ENCODE measurements at regions of chr9 and their contacts with region 1.

Region 1: DNA sequence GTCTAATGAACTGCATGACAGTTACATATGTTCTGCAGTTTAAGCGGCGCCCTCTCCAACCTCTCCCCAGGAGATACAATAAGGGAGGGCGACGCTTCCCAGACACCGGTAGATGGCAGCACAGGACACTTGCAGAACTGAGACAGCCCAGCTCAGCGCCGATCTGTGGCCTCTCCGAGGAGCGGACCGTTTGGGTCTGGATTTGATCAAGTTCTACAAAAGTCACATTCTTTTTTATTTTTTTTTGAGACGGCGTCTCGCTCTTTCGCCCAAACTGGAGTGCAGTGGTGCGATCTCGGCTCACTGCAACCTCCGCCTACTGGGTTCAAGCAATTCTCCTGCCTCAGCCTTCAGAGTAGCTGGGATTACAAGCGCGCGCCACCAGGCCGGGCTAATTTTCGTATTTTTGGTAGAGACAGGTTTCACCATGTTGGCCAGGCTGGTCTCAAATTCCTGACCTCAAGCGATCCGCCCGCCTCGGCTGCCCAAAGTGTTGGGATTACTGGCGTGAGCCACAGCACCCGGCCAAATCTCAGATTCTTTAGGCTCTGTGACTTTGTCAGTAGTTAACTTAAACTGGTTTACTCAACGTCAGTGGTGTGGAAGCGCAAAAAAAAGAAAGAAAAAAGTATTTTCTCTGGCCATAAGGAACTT is 1.4 kb upstream of the ATOSB start:
- DNase-seq: peak; percentile 90 to 93
- ATAC-seq: peak; percentile 65 to 83
- H3K4me3 ChIP-seq: peak overlapping the region; percentile 48
- H3K27ac ChIP-seq: peak overlapping the region; percentile 44 to 71; a peak in 4 of 6 replicates
- H3K4me1 ChIP-seq: peaks cover 27% of the 10 kb centered on the region
- CTCF ChIP-seq: peak; percentile 98
- EP300 ChIP-seq: no peak
- POLR2A ChIP-seq: no peak
- RAD21 ChIP-seq: peak; percentile 94 to 96

Region 2: DNA sequence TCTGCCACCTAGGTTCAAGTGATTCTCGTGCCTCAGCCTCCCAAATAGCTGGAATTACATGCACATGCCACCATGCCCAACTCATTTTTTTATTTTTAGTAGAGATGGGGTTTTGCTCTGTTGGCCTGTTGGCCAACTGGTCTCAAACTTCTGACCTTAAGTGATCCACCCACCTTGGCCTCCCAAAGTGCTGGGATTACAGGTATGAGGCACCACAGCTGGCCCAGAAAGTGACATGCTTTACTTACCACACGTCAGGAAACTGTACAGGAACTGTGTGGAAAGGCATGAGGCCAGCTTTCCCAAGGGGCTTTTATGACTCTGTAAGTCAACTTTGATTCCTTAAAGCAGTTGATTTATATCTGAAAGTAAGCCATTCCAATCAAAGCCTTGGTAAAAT is 102.5 kb before region 1 on chr9:
- CTCF ChIA-PET with region 1: no interaction called
- POLR2A ChIA-PET with region 1: no interaction called
- DNase-seq: no peak
- ATAC-seq: no peak
- H3K4me3 ChIP-seq: no peak overlapping the region
- H3K27ac ChIP-seq: no peak overlapping the region
- H3K4me1 ChIP-seq: no peaks in the 10 kb centered on the region
- CTCF ChIP-seq: no peak
- EP300 ChIP-seq: no peak
- POLR2A ChIP-seq: no peak
- RAD21 ChIP-seq: no peak

Region 3: DNA sequence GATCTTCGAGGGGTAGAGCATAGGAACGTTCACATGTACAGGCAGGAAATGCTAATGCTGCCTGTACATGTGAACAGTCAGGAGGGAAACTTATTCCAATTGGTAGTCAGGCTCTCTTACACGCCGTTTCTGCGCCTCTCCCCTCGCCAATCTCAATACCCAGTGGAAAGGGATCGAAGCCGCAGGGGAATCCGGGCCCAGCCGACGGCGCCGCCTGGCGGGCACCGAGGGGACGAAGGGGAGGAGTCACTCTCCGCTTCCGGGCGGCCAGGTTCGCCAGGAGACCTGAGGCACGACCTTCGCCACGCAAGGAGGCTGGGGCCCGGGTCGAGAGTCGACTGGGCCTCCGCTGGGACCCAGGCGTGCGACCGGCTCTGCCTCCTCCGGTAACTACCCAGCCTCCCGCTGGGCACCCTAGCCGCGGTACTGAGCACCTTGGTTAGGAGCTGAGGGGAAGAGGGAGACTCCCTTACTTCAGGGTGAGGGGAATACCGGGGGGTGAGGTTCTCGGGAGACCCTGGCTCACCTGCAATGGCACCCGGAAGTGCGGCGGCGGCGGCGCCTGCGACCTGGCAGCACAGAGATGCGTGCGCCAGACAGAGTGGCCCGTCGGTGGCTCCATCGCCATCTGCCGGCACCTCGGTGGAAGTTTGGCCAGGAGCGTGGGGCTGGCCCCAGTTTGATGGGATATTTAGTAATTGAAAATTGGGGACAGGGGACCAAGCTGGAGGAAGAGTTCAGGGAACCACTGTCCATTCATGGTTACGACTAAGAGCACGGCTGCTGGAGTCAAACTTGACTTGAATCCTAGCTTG is 20.8 kb before region 1 on chr9 and contains the start of gene PIGO:
- CTCF ChIA-PET with region 1: interaction called, 110 read pairs
- POLR2A ChIA-PET with region 1: interaction called, 9 read pairs
- DNase-seq: peak; percentile 89 to 94
- ATAC-seq: peak; percentile 95 to 96
- H3K4me3 ChIP-seq: peak within 1 kb of the TSS; percentile 66
- H3K27ac ChIP-seq: peak within 1 kb of the TSS; percentile 94
- H3K4me1 ChIP-seq: peaks cover 12% of the 10 kb centered on the region
- CTCF ChIP-seq: peak; percentile 82
- EP300 ChIP-seq: no peak
- POLR2A ChIP-seq: peak; percentile 71
- RAD21 ChIP-seq: peak; percentile 49 to 58
- polyA plus RNA-seq, gene PIGO: 50.4 and 60.0 TPM in 2 replicates

Region 4: GRCh38 chr9:35135988-35136387 is 19.0 kb after region 1 on chr9:
- CTCF ChIA-PET with region 1: interaction called, 12 read pairs
- POLR2A ChIA-PET with region 1: no interaction called
- DNase-seq: no peak
- ATAC-seq: no peak
- H3K4me3 ChIP-seq: no peak overlapping the region
- H3K27ac ChIP-seq: no peak overlapping the region
- H3K4me1 ChIP-seq: no peaks in the 10 kb centered on the region
- CTCF ChIP-seq: no peak
- EP300 ChIP-seq: no peak
- POLR2A ChIP-seq: no peak
- RAD21 ChIP-seq: no peak

Region 5: GRCh38 chr9:35258676-35259474 is 141.8 kb after region 1 on chr9:
- CTCF ChIA-PET with region 1: interaction called, 38 read pairs
- POLR2A ChIA-PET with region 1: no interaction called
- DNase-seq: peak; percentile 13 to 75
- ATAC-seq: peak; percentile 68 to 84; a peak in 5 of 6 replicates
- H3K4me3 ChIP-seq: no peak overlapping the region
- H3K27ac ChIP-seq: no peak overlapping the region
- H3K4me1 ChIP-seq: no peaks in the 10 kb centered on the region
- CTCF ChIP-seq: peak; percentile 73
- EP300 ChIP-seq: no peak
- POLR2A ChIP-seq: no peak
- RAD21 ChIP-seq: peak; percentile 76 to 77

Measured in A549 (cell line).